Activated B cell treated with CpG ODN at 0.5 μM for 24 hours (primary cell): ENCODE measurements at regions of chr12 and their contacts with region 1.

Region 1: GRCh38 chr12:51714666-51715065 is 123.6 kb downstream of the SCN8A start:
- DNase-seq: no peak
- ATAC-seq: no peak
- H3K4me3 Mint-ChIP-seq: no peak overlapping the region
- H3K27ac Mint-ChIP-seq: no peak overlapping the region
- H3K4me1 Mint-ChIP-seq: no peaks in the 10 kb centered on the region
- H3K27me3 Mint-ChIP-seq: peaks cover 25% of the 10 kb centered on the region
- CTCF ChIP-seq: no peak

Region 2: DNA sequence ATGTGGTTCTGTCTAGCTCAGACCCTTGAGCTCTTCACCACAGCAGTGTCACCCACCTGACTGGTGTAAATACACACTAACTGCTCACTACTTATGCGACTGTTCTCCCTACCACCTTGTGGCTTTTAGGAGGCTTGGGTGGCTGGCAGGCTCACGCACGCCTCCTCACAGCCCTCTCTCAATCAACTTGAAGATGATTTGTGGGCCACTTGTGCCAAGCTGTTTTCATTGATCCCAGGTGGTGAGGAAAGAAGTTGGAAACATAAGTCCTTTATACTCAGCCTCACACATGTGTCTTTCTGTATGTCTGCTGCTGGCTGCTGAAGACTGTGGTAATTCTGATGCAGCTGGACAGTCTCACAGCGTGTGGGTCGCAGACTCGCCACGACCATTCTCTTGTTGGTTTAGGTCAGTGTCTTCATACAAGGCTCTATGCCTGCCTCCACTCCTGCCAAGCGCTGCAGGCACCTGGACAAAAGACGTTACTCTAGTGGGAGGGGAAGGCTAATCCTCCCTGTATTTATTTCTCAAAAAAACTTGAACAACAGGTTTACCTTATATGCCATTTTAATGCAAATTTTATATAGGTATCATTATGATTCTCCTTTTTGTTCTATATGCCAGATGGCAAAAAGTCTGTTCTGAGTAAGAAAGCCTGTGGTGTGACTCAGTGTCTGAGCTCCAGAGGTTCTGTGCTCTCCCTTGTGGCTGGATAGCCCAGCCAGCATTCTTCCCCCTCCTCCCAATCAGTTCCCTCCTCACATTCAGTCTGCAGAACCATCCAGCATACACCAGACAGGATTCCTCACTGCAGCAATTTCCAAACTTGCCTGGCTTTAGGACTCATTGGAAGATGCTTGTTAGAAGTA is 1094.3 kb before region 1 on chr12:
- CTCF ChIA-PET with region 1: no interaction called
- POLR2A ChIA-PET with region 1: interaction called, 11 read pairs
- intact Hi-C with region 1: no loop called
- DNase-seq: no peak
- ATAC-seq: no peak
- H3K4me3 Mint-ChIP-seq: no peak overlapping the region
- H3K27ac Mint-ChIP-seq: peak overlapping the region; percentile 47
- H3K4me1 Mint-ChIP-seq: peaks cover 75% of the 10 kb centered on the region
- H3K27me3 Mint-ChIP-seq: no peaks in the 10 kb centered on the region
- CTCF ChIP-seq: no peak

Region 3: GRCh38 chr12:51139292-51139844 is 575.3 kb before region 1 on chr12:
- CTCF ChIA-PET with region 1: no interaction called
- POLR2A ChIA-PET with region 1: no interaction called
- intact Hi-C with region 1: no loop called
- DNase-seq: no peak
- ATAC-seq: no peak
- H3K4me3 Mint-ChIP-seq: no peak overlapping the region
- H3K27ac Mint-ChIP-seq: no peak overlapping the region
- H3K4me1 Mint-ChIP-seq: no peaks in the 10 kb centered on the region
- H3K27me3 Mint-ChIP-seq: no peaks in the 10 kb centered on the region
- CTCF ChIP-seq: no peak

Region 4: DNA sequence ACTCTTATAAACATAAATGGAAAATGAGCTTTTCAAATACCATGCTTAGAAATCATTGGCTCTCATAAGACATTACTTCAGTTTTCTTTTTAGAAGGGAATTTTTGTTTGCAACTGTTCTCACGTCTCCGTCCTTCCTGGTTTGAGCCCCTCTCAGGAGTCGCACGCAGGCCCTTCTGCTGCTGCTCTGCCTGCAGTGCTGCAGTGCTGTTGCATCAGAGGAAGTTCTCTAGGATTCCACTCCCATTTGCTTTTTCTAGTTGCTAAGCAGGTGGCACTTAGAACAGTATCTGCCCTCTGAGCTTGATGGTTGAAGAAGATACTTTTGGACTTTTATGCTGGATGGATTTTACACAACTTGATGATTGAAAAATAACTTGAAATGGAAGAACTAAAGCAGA is 52.8 kb before region 1 on chr12:
- CTCF ChIA-PET with region 1: no interaction called
- POLR2A ChIA-PET with region 1: no interaction called
- intact Hi-C with region 1: no loop called
- DNase-seq: no peak
- ATAC-seq: no peak
- H3K4me3 Mint-ChIP-seq: no peak overlapping the region
- H3K27ac Mint-ChIP-seq: no peak overlapping the region
- H3K4me1 Mint-ChIP-seq: no peaks in the 10 kb centered on the region
- H3K27me3 Mint-ChIP-seq: peaks cover 31% of the 10 kb centered on the region
- CTCF ChIP-seq: no peak

Region 5: DNA sequence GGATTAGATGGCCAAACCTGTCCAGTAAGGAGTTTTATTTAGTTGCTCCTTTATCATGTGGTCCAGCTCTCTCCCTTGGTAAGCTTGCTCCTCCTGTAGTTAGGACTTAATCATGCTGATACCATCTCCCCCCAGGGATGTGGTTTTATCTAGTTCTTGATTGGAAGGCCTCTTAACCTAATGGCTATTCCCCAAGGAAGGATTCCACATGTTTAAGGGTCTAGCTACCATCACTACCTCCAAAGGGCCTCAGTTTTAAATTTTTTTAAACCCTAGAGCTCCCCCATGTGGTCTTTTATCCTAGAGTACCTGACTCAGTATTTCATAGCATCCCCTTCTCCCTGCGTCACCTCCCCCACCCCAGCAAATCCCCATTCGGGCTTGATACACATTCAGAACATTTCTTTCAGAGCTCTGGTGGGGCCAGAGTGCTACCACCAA is 1762.1 kb after region 1 on chr12:
- CTCF ChIA-PET with region 1: no interaction called
- POLR2A ChIA-PET with region 1: no interaction called
- intact Hi-C with region 1: no loop called
- DNase-seq: no peak
- ATAC-seq: peak; percentile 34
- H3K4me3 Mint-ChIP-seq: no peak overlapping the region
- H3K27ac Mint-ChIP-seq: no peak overlapping the region
- H3K4me1 Mint-ChIP-seq: peaks cover 2% of the 10 kb centered on the region
- H3K27me3 Mint-ChIP-seq: no peaks in the 10 kb centered on the region
- CTCF ChIP-seq: no peak